ENCODE measurements at regions of chr1 and their contacts with region 1.

Region 1: DNA sequence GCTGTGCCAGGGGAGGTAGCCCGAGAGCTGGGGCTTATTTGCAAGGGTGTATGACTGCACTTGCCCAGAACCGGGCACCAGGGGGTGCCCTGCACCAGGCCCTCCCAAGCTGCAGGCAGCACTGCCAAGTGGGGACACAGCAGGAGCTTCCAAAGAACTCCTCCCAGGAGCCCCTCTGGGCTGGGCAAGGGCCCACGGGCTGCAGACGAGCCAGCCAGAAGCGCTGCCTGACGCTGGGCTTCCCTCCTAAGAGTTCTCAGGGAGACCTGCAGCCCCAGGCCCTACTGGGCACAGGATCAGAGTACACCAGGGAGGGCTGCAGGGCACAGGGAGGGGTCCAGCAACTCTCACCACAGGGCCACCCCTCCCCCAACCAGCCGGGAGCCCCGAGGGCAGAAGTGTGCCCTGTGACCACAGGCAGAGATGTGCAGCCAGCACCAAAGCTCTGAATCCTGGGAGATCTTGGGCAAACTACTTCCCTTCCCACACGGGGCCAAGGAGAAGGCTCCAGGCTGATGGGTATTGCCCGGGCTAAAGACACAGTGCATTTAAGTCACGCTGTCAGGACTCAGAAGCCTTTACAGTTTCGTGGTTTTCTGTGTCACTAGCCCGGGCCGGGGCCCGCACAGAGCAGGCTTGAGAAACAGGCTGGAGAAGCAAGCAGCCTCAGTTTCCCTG is 63.4 kb downstream of the KCNAB2 start:
- DNase-seq: peak; percentile 83
- H3K4me3 Mint-ChIP-seq: no peak overlapping the region
- H3K27ac Mint-ChIP-seq: no peak overlapping the region
- H3K4me1 Mint-ChIP-seq: no peaks in the 10 kb centered on the region
- H3K27me3 Mint-ChIP-seq: peaks cover 2% of the 10 kb centered on the region

Region 2: GRCh38 chr1:6185635-6186382 is 76.7 kb after region 1 on chr1:
- intact Hi-C with region 1: loop called (anchors 10 kb)
- DNase-seq: peak; percentile 77
- H3K4me3 Mint-ChIP-seq: no peak overlapping the region
- H3K27ac Mint-ChIP-seq: no peak overlapping the region
- H3K4me1 Mint-ChIP-seq: peaks cover 23% of the 10 kb centered on the region
- H3K27me3 Mint-ChIP-seq: peaks cover 16% of the 10 kb centered on the region

Measured in activated CD4-positive, alpha-beta T cell treated with anti-CD3 and anti-CD28 coated beads, Interleukin-2, amount 10 ng/mL, durations not matched to agents 24 days and 14 days (primary cell).